ENCODE measurements at regions of chr13 and their contacts with region 1.

Region 1: GRCh38 chr13:85806553-85807175 is 7.4 kb upstream of the SLITRK6 start:
- DNase-seq: no peak
- H3K4me3 ChIP-seq: no peak overlapping the region
- H3K27ac ChIP-seq: no peak overlapping the region
- H3K4me1 ChIP-seq: no peaks in the 10 kb centered on the region
- H3K27me3 ChIP-seq: no peaks in the 10 kb centered on the region
- CTCF ChIP-seq: peak in 5 of 6 experiments; percentile 40 to 70 (median 57)
- POLR2A ChIP-seq: no peak

Region 2: DNA sequence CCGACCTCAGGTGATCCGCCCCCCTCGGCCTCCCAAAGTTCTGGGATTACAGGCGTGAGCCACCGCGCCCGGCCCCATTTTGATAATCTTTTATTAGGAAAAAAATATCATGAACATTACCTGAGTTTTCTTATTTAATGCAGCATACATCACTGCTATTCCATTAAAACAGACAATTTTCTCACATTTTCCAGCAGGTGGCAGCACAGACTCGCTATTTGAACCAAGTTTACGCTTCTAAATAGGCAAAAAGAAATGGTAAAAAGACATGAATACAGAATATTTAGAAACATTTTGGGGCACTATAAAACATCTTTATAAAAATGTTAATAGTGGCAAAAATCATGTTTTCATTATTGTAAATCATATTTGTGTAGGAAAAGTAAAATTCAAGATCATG is 910.5 kb before region 1 on chr13:
- intact Hi-C with region 1: loop called (anchors 5 kb)
- DNase-seq: peak in 1 of 2 donors; percentile 39
- H3K4me3 ChIP-seq: no peak overlapping the region
- H3K27ac ChIP-seq: no peak overlapping the region
- H3K4me1 ChIP-seq: no peaks in the 10 kb centered on the region
- H3K27me3 ChIP-seq: no peaks in the 10 kb centered on the region
- CTCF ChIP-seq: peak; percentile 40 to 68 (median 54)
- POLR2A ChIP-seq: no peak

Region 3: GRCh38 chr13:84917252-84917878 is 889.3 kb before region 1 on chr13:
- intact Hi-C with region 1: loop called (anchors 5 kb)
- DNase-seq: no peak
- H3K4me3 ChIP-seq: no peak overlapping the region
- H3K27ac ChIP-seq: no peak overlapping the region
- H3K4me1 ChIP-seq: no peaks in the 10 kb centered on the region
- H3K27me3 ChIP-seq: no peaks in the 10 kb centered on the region
- CTCF ChIP-seq: peak in 5 of 6 experiments; percentile 13 to 61 (median 46)
- POLR2A ChIP-seq: no peak

Region 4: DNA sequence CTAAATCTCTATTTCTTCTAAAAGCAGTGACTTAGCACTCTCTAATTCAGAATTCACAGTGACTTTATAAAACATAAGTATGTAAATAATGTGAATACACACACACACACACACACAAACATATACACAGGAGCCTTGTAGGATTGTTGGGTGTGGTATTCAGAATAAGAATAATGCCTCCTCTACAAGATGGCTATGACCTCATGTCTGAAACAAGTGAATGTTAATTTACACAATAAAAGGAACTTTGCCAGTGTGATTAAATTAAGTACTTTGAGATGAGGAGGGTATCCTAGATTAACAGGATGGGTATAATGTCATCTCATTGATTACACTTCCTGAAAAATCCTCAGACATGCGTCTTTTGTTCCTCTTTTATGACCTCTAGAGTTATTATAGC is 242.1 kb before region 1 on chr13:
- intact Hi-C with region 1: no loop called
- DNase-seq: no peak
- H3K4me3 ChIP-seq: no peak overlapping the region
- H3K27ac ChIP-seq: no peak overlapping the region
- H3K4me1 ChIP-seq: no peaks in the 10 kb centered on the region
- H3K27me3 ChIP-seq: no peaks in the 10 kb centered on the region
- CTCF ChIP-seq: no peak
- POLR2A ChIP-seq: no peak